Dorsolateral prefrontal cortex (tissue), 120 donors: ENCODE measurements at regions of chr12 and their contacts with region 1.

Region 1: GRCh38 chr12:99043319-99043914 is 398.3 kb downstream of the APAF1 start:
- DNase-seq: peak; percentile 53 to 80 (median 68)
- H3K4me3 ChIP-seq: no peak overlapping the region
- H3K27ac ChIP-seq: peak overlapping the region in 3 of 59 donors; percentile 23 to 55 (median 46)
- H3K27me3 ChIP-seq: no peaks in the 10 kb centered on the region
- CTCF ChIP-seq: peak; percentile 75 to 97 (median 89)

Region 2: GRCh38 chr12:99619389-99620158 is 576.2 kb after region 1 on chr12:
- intact Hi-C with region 1: loop called in 1 of 2 experiments (anchors 10 kb)
- DNase-seq: no peak
- H3K4me3 ChIP-seq: no peak overlapping the region
- H3K27ac ChIP-seq: no peak overlapping the region
- H3K27me3 ChIP-seq: no peaks in the 10 kb centered on the region
- CTCF ChIP-seq: peak in 48 of 56 donors; percentile 11 to 57 (median 42)

Region 3: GRCh38 chr12:99658671-99659349 is 615.4 kb after region 1 on chr12:
- intact Hi-C with region 1: loop called in 1 of 2 experiments (anchors 10 kb)
- DNase-seq: no peak
- H3K4me3 ChIP-seq: no peak overlapping the region
- H3K27ac ChIP-seq: no peak overlapping the region
- H3K27me3 ChIP-seq: no peaks in the 10 kb centered on the region
- CTCF ChIP-seq: peak in 51 of 56 donors; percentile 10 to 70 (median 46)

Region 4: DNA sequence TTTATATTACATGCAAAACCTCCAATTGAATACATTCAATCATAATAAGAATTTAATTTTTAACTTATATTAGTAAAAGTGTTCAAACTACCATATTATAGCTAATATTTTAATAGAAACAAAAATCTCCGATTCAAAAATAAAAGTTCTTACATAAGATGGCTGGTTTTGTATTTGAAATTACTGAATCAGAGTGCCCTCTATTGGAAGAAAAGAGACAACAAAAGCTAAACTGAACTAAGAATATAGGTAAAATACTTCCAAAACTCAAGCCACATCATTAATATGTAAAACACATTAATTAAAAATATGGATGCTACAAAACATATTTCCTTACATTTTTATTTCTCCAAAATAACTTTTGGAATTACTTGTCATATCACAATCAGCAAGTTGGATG is 724.4 kb after region 1 on chr12:
- intact Hi-C with region 1: loop called (anchors 5 to 10 kb)
- DNase-seq: no peak
- H3K4me3 ChIP-seq: peak overlapping the region in 52 of 59 donors; percentile 2 to 56 (median 36)
- H3K27ac ChIP-seq: peak overlapping the region in 47 of 59 donors; percentile 3 to 81 (median 65)
- H3K27me3 ChIP-seq: no peaks in the 10 kb centered on the region
- CTCF ChIP-seq: peak; percentile 36 to 82 (median 66)